ENCODE measurements at regions of chr4 and their contacts with region 1.

Region 1: GRCh38 chr4:46967631-46968030 is 25.8 kb downstream of the GABRA4 start:
- DNase-seq: no peak
- ATAC-seq: no peak
- H3K4me3 ChIP-seq: no peak overlapping the region
- H3K27ac ChIP-seq: no peak overlapping the region
- H3K4me1 ChIP-seq: no peaks in the 10 kb centered on the region
- H3K27me3 ChIP-seq: no peaks in the 10 kb centered on the region; a peak in 2 of 4 replicates
- CTCF ChIP-seq: no peak
- EP300 ChIP-seq: no peak
- POLR2A ChIP-seq: no peak
- RAD21 ChIP-seq: no peak

Region 2: GRCh38 chr4:46956451-46956850 is 11.2 kb before region 1 on chr4:
- CTCF ChIA-PET with region 1: interaction called, 8 read pairs
- POLR2A ChIA-PET with region 1: interaction called, 3 read pairs
- RAD21 ChIA-PET with region 1: interaction called, 6 read pairs
- SMC1A ChIA-PET with region 1: interaction called, 21 read pairs
- in situ Hi-C with region 1: no loop called
- intact Hi-C with region 1: no loop called
- DNase-seq: no peak
- ATAC-seq: no peak
- H3K4me3 ChIP-seq: no peak overlapping the region
- H3K27ac ChIP-seq: no peak overlapping the region
- H3K4me1 ChIP-seq: no peaks in the 10 kb centered on the region
- H3K27me3 ChIP-seq: no peaks in the 10 kb centered on the region
- CTCF ChIP-seq: no peak
- EP300 ChIP-seq: no peak
- POLR2A ChIP-seq: no peak
- RAD21 ChIP-seq: no peak